ENCODE measurements at regions of chr9 and their contacts with region 1.

Region 1: GRCh38 chr9:6268830-6269397 is 53.3 kb downstream of the IL33 start:
- DNase-seq: no peak
- H3K4me3 ChIP-seq: no peak overlapping the region
- H3K27ac ChIP-seq: no peak overlapping the region
- H3K4me1 ChIP-seq: peaks cover 6% of the 10 kb centered on the region
- H3K27me3 ChIP-seq: no peaks in the 10 kb centered on the region
- CTCF ChIP-seq: no peak
- EP300 ChIP-seq: no peak
- POLR2A ChIP-seq: no peak

Region 2: DNA sequence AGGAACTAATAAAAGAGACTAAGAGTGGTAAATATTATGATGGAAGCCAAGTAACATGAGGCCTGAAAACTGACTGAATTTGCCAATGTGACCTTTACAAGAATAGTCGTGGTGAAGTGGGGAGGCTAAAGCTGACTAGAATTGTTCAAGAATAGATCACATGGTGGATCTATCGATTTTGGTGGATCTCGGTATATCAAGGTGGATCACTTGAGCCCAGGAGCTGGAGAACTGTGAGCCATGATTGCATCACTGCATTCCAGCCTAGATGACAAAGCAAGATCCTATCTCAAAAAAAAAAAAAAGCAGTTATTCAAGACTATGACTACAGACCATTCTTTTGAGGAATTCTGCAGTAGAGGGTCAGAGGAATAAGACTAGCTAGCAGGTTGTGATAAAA is 451.0 kb before region 1 on chr9:
- intact Hi-C with region 1: loop called in 1 of 4 experiments (anchors 10 kb)
- DNase-seq: no peak
- H3K4me3 ChIP-seq: no peak overlapping the region
- H3K27ac ChIP-seq: no peak overlapping the region
- H3K4me1 ChIP-seq: no peaks in the 10 kb centered on the region
- H3K27me3 ChIP-seq: no peaks in the 10 kb centered on the region
- CTCF ChIP-seq: no peak
- EP300 ChIP-seq: no peak
- POLR2A ChIP-seq: no peak

Region 3: DNA sequence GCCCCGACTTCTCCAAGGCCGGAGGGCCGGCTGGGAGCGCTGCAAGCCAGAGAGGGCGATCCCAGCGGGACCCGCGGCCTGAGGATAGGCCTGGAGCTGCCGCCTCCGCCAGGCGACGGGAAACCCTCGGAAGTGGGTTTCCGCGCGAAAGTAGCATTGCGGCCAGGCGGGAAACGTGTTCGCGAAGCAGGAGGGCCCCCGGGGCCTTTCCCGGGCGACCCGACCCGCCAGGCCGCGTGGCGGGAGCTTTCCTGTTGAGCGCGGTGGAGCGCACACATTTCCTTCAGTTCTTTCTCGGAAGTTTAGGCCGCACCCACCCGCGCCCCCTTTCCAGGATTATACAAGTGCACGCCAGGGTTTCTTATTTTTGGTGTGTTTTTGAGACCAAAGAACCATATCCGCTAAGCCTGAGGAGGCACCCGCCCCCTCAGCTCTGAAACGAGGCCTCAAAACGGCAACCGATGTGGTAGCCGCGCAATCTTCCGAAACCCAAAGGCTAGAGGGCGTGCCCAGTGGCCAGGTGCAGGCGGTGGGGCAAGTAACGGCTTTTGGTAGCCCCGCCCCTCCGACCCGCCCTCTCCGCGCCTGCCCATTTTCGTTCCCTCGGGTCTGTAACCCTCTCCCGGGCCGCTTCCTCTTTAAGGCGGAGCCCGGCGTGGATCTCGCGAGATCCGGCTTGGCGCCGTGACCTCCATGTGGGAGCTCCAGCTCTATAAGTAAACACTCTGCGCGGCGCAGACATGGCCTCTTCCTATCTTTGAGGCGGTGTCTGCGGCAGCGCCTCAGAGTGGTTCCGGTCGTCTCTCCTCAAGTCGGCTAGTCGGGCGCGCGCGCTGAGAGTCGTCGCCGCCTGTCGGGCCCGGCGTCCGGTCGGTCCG is 143.8 kb after region 1 on chr9 and contains the start of gene UHRF2:
- intact Hi-C with region 1: no loop called
- DNase-seq: peak; percentile 99
- H3K4me3 ChIP-seq: peak within 1 kb of the TSS; percentile 82
- H3K27ac ChIP-seq: peak within 1 kb of the TSS; percentile 74 to 97
- H3K4me1 ChIP-seq: peaks cover 9% of the 10 kb centered on the region
- H3K27me3 ChIP-seq: no peaks in the 10 kb centered on the region
- CTCF ChIP-seq: peak in 2 of 3 donors; percentile 8 to 13
- EP300 ChIP-seq: no peak
- POLR2A ChIP-seq: peak; percentile 49
- total RNA-seq, gene UHRF2: 37.3 to 63.3 (median 46.7) TPM

Measured in ovary (tissue), 10 donors.